ENCODE measurements at regions of chr10 and their contacts with region 1.

Region 1: GRCh38 chr10:96339957-96340904 is 18.6 kb downstream of the OPALIN start:
- DNase-seq: peak; percentile 29
- H3K4me3 ChIP-seq: no peak overlapping the region
- H3K27ac ChIP-seq: no peak overlapping the region
- H3K27me3 ChIP-seq: no peaks in the 10 kb centered on the region
- CTCF ChIP-seq: peak; percentile 72

Region 2: DNA sequence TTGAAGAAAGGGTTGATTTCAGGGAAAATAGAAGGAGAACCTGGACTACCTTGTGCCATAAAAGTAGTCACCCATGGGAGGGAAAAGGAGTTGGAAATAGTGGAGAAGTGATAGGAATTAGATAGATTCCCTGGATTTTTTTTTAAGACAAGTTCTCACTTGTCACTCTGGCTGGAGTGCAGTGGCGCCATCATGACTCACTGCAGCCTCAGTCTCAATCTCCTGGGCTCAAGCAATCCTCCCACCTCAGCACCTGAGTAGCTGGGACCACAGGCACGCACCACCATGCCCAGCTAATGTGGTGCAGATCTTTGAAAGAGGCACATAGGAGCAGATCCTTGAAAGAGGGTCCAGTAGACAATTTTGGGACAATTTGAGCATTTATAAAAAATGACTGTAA is 59.4 kb before region 1 on chr10:
- CTCF ChIA-PET with region 1: interaction called, 12 read pairs
- POLR2A ChIA-PET with region 1: no interaction called
- DNase-seq: no peak
- H3K4me3 ChIP-seq: no peak overlapping the region
- H3K27ac ChIP-seq: no peak overlapping the region
- H3K27me3 ChIP-seq: no peaks in the 10 kb centered on the region
- CTCF ChIP-seq: no peak

Region 3: DNA sequence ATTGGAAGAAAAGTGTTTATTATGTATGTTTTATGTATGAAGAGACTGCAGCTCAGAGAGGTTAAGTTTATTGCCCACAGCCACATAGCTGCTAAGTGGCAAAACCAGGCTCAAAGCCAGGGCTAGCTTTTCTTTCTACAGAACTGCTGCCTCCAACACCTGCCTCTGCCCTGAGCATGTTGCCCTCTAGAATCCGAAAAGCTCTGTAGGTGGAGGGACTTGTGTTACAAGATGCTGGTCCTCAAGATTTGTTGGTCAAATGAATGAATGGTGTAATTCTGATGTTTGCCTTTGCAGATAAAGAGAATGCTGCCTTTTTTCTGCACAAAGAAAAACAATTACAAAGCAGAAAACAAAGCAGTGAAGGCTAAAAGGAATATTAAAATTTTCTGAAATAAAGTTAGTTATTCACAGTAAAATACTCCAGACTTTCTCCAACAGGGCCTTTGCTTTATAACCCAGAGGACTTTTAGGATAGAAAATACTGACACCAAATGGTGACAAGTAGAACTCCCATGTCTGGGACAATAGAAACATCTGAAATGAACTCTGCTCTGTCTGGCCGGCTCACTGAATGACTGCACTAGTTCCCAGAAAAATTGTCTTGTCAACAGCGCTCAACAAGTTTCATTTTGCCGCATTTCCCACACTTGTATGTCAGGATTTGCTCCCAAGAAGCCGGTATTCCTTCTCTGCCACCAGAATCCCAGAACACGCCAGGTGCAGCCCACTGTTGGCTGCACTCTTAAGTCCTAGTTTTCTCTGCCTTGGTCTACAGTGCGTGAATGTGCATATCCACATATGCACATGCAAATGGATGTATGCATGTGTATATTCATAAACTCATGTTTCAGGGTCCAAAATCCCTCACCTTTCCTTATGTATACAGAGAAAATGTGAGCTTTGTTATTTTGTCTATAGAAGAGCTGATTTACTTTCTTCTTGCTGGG is 47.0 kb before region 1 on chr10:
- CTCF ChIA-PET with region 1: interaction called, 10 read pairs
- POLR2A ChIA-PET with region 1: no interaction called
- DNase-seq: peak; percentile 1
- H3K4me3 ChIP-seq: no peak overlapping the region
- H3K27ac ChIP-seq: no peak overlapping the region
- H3K27me3 ChIP-seq: peaks cover 3% of the 10 kb centered on the region
- CTCF ChIP-seq: peak; percentile 54

Measured in AG04450 (cell line).